ENCODE measurements at regions of chr2 and their contacts with region 1.

Region 1: DNA sequence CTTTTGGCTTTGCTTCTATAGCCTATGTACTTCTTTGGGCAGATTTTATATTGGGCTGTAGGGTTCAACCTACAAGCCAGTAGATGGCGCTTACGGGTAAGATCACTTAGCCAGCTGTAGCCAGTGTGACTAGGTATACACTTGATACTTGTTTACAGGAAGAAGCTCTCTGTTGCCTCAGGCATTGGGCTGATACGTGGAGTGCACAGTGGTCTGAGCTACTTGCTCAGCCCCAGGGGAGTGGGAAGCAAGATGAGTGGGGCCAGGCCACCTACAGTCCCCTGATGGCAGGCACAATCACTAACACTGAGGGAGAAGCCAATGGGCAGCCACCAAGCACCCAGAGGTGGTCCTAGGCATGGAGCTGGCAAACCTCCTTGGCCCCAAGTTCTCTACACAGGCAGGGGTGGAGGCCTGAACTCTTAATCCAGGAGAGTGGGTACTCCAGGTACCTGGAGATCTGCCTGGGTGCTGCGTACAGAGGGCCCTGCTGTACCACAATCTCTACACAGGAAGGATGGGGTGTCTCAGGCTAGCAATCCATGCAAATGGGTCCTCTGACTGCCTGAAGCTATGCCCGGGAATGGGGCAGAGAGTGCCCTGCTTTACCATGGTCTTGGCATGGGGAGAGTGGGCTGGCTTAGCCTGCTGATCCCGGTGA is 122.2 kb downstream of the NCOA1 start:
- DNase-seq: peak; percentile 27
- H3K4me3 ChIP-seq: no peak overlapping the region
- H3K27ac ChIP-seq: no peak overlapping the region
- H3K27me3 ChIP-seq: no peaks in the 10 kb centered on the region
- CTCF ChIP-seq: peak; percentile 63

Region 2: DNA sequence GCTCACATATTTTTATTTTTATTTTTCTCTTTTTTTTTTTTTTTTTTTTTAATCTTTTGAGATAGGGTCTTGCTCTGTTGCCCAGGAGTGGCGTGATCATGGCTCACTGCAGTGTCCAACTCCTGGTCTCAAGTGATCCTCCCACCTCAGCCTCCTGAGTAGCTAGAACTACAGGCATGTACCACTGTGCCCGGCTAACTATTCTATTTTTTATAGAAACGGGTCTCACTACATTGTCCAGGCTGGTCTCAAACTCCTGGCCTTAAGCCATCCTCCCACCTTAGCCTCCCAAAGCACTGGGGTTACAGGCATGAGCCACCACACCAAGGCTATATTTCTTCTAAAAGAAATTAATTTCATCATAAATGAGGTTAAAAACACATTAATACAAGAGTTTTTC is 134.0 kb after region 1 on chr2:
- CTCF ChIA-PET with region 1: interaction called, 10 read pairs
- POLR2A ChIA-PET with region 1: no interaction called
- DNase-seq: no peak
- H3K4me3 ChIP-seq: no peak overlapping the region
- H3K27ac ChIP-seq: no peak overlapping the region
- H3K27me3 ChIP-seq: no peaks in the 10 kb centered on the region
- CTCF ChIP-seq: no peak

Region 3: GRCh38 chr2:24792874-24793760 is 179.8 kb after region 1 on chr2 and contains the starts of genes CENPO and PTRHD1:
- CTCF ChIA-PET with region 1: interaction called, 19 read pairs
- POLR2A ChIA-PET with region 1: no interaction called
- DNase-seq: peak; percentile 93
- H3K4me3 ChIP-seq: peak within 1 kb of the TSS; percentile 97
- H3K27ac ChIP-seq: peak within 1 kb of the TSS; percentile 94
- H3K27me3 ChIP-seq: no peaks in the 10 kb centered on the region
- CTCF ChIP-seq: peak; percentile 69
- polyA plus RNA-seq, gene CENPO: 12.1 and 15.7 TPM in 2 replicates
- polyA plus RNA-seq, gene PTRHD1: 42.5 and 51.5 TPM in 2 replicates

Region 4: GRCh38 chr2:24827321-24828237 is 214.3 kb after region 1 on chr2:
- CTCF ChIA-PET with region 1: interaction called, 34 read pairs
- POLR2A ChIA-PET with region 1: no interaction called
- DNase-seq: peak; percentile 81
- H3K4me3 ChIP-seq: no peak overlapping the region
- H3K27ac ChIP-seq: no peak overlapping the region
- H3K27me3 ChIP-seq: no peaks in the 10 kb centered on the region
- CTCF ChIP-seq: peak; percentile 95